ENCODE measurements at regions of chr1 and their contacts with region 1.

Region 1: DNA sequence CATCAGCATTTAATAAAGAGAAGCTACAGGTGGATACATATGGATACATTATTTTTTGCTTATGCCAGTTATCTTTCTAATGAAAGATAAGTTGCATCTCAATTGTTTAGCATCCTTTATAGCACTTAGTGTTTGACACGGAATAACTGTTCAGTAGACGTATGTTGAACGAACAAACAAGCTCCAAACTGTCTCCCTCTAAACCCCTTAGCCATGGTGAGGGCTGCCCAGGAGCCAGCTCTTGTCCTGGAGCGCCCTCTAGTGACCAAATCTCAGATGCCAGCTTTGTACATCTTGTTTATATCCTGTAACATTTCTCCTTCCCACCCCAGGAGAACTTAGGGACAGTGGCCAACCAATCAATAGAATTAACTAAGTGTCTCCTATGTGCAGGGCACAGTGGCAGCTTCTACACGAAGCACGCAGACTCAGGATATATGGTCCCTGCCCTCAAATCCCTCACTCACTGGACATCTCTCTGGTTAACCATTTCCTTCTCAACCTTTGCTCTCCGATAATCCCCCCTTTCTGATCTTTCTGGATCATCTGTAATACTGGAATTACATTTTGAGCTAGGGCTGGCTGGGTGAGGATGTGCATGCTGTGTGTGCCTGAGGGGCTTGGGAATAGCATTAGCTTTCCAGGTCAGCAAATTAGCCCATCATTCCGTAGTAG is 22.9 kb downstream of the KCNA10 start:
- H3K4me3 ChIP-seq: no peak overlapping the region
- H3K27ac ChIP-seq: no peak overlapping the region
- H3K4me1 ChIP-seq: no peaks in the 10 kb centered on the region
- CTCF ChIP-seq: peak; percentile 87

Region 2: DNA sequence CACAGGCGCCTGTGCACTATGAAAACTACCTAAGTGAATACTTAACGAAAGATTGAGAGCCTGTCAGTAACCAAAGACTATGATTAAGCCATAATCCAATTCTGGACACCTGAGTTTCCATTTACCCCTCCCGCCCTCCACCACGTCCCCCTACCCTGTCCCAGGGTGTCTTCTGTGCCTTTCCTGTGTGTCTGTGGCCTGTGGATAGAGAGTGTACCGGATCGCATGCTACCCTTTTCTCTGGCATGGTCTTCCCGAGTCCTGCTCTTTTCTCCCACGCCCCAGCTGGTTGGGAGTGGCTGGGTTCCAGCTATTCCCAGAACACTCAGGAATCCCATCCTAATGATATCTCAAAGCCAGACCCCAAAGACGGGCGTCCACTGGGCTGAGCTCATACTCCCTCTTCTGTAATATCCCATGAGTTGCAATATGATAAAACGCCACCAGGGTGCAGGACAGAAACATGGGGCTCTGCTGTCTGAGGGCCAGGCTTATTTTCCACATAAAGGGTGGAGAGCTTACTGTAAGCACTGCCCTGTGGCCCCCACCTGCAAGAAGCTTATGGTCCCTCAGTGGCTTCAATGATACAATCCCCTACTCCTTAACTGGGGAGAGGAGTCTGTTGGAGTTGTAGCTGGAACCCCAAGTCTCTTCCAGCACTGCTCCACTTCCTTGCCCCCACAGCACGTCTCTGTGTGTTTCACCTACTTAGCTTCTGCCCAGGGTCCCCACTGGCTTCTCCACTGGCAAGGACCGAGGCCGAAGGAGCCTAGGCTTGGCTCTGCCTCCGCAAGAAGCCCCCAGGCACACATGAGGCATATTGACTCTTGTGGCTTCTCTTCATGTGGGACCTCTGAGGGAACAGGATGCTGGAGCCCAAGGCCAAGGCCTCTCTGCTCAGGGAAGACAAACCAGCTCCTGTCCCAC is 408.0 kb before region 1 on chr1:
- CTCF ChIA-PET with region 1: interaction called, 15 read pairs
- POLR2A ChIA-PET with region 1: no interaction called
- H3K4me3 ChIP-seq: no peak overlapping the region
- H3K27ac ChIP-seq: no peak overlapping the region
- H3K4me1 ChIP-seq: no peaks in the 10 kb centered on the region
- CTCF ChIP-seq: peak; percentile 40; the same call in 1 of the 2 replicates

Region 3: GRCh38 chr1:110196917-110197765 is 298.9 kb before region 1 on chr1:
- CTCF ChIA-PET with region 1: interaction called, 241 read pairs
- POLR2A ChIA-PET with region 1: no interaction called
- H3K4me3 ChIP-seq: no peak overlapping the region
- H3K27ac ChIP-seq: no peak overlapping the region
- H3K4me1 ChIP-seq: no peaks in the 10 kb centered on the region
- CTCF ChIP-seq: peak; percentile 63; the same call in 1 of the 2 replicates

Region 4: GRCh38 chr1:110319332-110320152 is 176.5 kb before region 1 on chr1:
- CTCF ChIA-PET with region 1: interaction called, 36 read pairs
- POLR2A ChIA-PET with region 1: no interaction called
- H3K4me3 ChIP-seq: no peak overlapping the region
- H3K27ac ChIP-seq: no peak overlapping the region
- H3K4me1 ChIP-seq: no peaks in the 10 kb centered on the region
- CTCF ChIP-seq: no peak

Region 5: GRCh38 chr1:110433803-110434202 is 62.3 kb before region 1 on chr1:
- CTCF ChIA-PET with region 1: interaction called, 10 read pairs
- POLR2A ChIA-PET with region 1: no interaction called
- H3K4me3 ChIP-seq: no peak overlapping the region
- H3K27ac ChIP-seq: no peak overlapping the region
- H3K4me1 ChIP-seq: no peaks in the 10 kb centered on the region
- CTCF ChIP-seq: no peak; the same call in 1 of the 2 replicates

Region 6: DNA sequence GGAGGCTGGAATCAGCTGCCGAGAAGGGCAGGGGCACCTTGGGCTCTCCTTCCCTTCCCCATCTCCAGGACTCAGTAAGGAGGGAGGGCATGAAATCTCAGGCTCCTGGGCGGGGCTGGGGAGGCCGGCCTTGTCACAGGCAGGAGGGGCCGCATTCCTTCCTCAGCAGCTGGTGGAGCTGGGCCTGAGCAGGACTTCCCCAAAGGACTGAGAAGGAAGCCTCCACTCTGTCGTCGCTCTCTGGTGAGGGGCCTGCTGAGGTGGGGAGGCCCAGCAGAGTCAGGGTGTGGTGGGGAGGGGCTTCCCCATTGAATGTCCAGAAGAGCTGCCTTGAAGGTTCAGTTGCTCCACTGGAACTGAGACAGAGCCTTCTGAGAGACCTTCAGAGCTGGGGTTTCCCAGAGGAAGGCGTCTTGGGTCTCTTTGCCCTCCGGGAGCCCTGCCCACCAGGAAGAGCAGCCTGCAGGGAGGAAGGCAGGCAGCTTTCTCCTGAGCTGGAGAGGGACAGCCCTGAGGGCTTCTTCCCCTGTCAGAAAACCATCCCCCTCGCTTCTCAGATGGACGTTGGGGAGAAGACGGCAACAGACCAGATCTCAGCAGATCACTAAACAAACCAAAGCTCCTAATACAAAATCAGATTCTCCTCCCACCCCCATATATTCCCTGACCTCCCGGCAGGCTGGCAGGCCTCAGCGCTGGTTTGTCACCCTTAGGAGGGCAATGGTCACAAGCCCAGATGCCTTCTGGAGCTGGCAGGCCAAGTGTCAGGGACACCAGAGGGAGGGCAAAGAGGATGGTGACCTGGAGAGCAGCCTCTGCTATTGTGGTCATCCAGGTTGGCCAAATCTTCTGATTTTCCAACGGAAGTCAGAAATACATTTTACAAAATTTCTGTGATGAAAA is 12.2 kb after region 1 on chr1:
- CTCF ChIA-PET with region 1: interaction called, 19 read pairs
- POLR2A ChIA-PET with region 1: interaction called, 3 read pairs
- H3K4me3 ChIP-seq: no peak overlapping the region
- H3K27ac ChIP-seq: no peak overlapping the region
- H3K4me1 ChIP-seq: no peaks in the 10 kb centered on the region
- CTCF ChIP-seq: no peak

Measured in HEK293 (cell line).